Activated CD4-positive, alpha-beta T cell treated with anti-CD3 and anti-CD28 coated beads for 36 hours (primary cell): ENCODE measurements at regions of chr12 and their contacts with region 1.

Region 1: GRCh38 chr12:85076688-85077430 is 40.7 kb downstream of the LRRIQ1 start:
- DNase-seq: no peak
- ATAC-seq: peak; percentile 60
- H3K4me3 Mint-ChIP-seq: no peak overlapping the region
- H3K27ac Mint-ChIP-seq: no peak overlapping the region
- H3K4me1 Mint-ChIP-seq: no peaks in the 10 kb centered on the region
- H3K27me3 Mint-ChIP-seq: no peaks in the 10 kb centered on the region

Region 2: DNA sequence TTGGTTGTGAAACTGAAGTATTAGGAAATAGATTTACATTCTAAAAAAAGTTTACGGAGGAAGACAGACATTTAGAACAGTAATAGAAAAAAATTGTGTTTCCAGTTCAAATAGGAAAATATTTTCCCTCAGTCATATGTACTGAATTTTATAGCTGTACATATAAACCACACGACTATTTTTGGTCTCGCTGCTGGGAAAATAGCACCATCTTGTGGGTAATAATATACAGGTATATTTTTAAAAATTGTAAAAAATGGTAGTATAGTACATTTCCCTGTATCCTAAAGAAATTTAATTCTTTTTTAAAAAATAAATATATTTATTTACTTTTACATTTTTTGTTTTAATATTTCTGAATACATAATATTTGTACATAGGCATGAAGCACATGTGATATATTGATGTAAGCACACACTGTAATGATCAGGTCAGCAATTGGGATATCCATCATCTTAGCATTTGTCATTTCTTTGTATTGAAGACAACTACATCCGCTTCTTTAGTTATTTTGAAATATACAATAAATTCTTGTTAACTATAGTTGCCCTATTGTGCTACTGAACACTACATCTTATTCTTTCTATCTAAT is 371.8 kb after region 1 on chr12:
- CTCF ChIA-PET with region 1: no interaction called
- POLR2A ChIA-PET with region 1: no interaction called
- intact Hi-C with region 1: loop called (anchors 2 kb)
- DNase-seq: no peak
- ATAC-seq: no peak
- H3K4me3 Mint-ChIP-seq: no peak overlapping the region
- H3K27ac Mint-ChIP-seq: no peak overlapping the region
- H3K4me1 Mint-ChIP-seq: no peaks in the 10 kb centered on the region
- H3K27me3 Mint-ChIP-seq: no peaks in the 10 kb centered on the region